Endothelial cell of umbilical vein (primary cell): ENCODE measurements at regions of chr10 and their contacts with region 1.

Region 1: GRCh38 chr10:119253433-119254174 is 46.2 kb downstream of the GRK5 start:
- DNase-seq: peak; percentile 73
- H3K4me3 ChIP-seq: no peak overlapping the region
- H3K27ac ChIP-seq: peak overlapping the region; percentile 35
- H3K4me1 ChIP-seq: peaks cover 46% of the 10 kb centered on the region
- H3K27me3 ChIP-seq: no peaks in the 10 kb centered on the region
- CTCF ChIP-seq: no peak
- POLR2A ChIP-seq: no peak

Region 2: GRCh38 chr10:119217991-119218490 is 35.6 kb before region 1 on chr10:
- CTCF ChIA-PET with region 1: no interaction called
- POLR2A ChIA-PET with region 1: no interaction called
- dilution Hi-C with region 1: no loop called
- intact Hi-C with region 1: no loop called
- DNase-seq: no peak
- H3K4me3 ChIP-seq: no peak overlapping the region
- H3K27ac ChIP-seq: no peak overlapping the region
- H3K4me1 ChIP-seq: no peaks in the 10 kb centered on the region
- H3K27me3 ChIP-seq: no peaks in the 10 kb centered on the region
- CTCF ChIP-seq: no peak
- POLR2A ChIP-seq: no peak

Region 3: GRCh38 chr10:119416855-119417254 is 163.3 kb after region 1 on chr10:
- CTCF ChIA-PET with region 1: interaction called, 6 read pairs
- POLR2A ChIA-PET with region 1: no interaction called
- dilution Hi-C with region 1: no loop called
- intact Hi-C with region 1: loop called (anchors 5 kb)
- DNase-seq: peak; percentile 52
- H3K4me3 ChIP-seq: no peak overlapping the region
- H3K27ac ChIP-seq: no peak overlapping the region
- H3K4me1 ChIP-seq: peaks cover 4% of the 10 kb centered on the region
- H3K27me3 ChIP-seq: no peaks in the 10 kb centered on the region
- CTCF ChIP-seq: peak; percentile 68 to 88
- POLR2A ChIP-seq: no peak

Region 4: GRCh38 chr10:119457966-119458766 is 204.6 kb after region 1 on chr10:
- CTCF ChIA-PET with region 1: no interaction called
- POLR2A ChIA-PET with region 1: no interaction called
- dilution Hi-C with region 1: no loop called
- intact Hi-C with region 1: no loop called
- DNase-seq: no peak
- H3K4me3 ChIP-seq: no peak overlapping the region
- H3K27ac ChIP-seq: no peak overlapping the region
- H3K4me1 ChIP-seq: no peaks in the 10 kb centered on the region
- H3K27me3 ChIP-seq: peaks cover 0 to 6% of the 10 kb centered on the region in 2 experiments
- CTCF ChIP-seq: no peak
- POLR2A ChIP-seq: no peak